Caco-2 (cell line): ENCODE measurements at regions of chr2 and their contacts with region 1.

Region 1: GRCh38 chr2:8761529-8762164 is 75.8 kb downstream of the KIDINS220 start:
- DNase-seq: peak in 1 of 2 experiments; percentile 34
- H3K4me3 ChIP-seq: no peak overlapping the region
- H3K4me3 Mint-ChIP-seq: no peak overlapping the region
- H3K27ac Mint-ChIP-seq: no peak overlapping the region
- H3K4me1 ChIP-seq: no peaks in the 10 kb centered on the region
- H3K4me1 Mint-ChIP-seq: no peaks in the 10 kb centered on the region
- H3K27me3 ChIP-seq: no peaks in the 10 kb centered on the region
- H3K27me3 Mint-ChIP-seq: no peaks in the 10 kb centered on the region
- CTCF ChIP-seq: peak; percentile 62 to 64

Region 2: DNA sequence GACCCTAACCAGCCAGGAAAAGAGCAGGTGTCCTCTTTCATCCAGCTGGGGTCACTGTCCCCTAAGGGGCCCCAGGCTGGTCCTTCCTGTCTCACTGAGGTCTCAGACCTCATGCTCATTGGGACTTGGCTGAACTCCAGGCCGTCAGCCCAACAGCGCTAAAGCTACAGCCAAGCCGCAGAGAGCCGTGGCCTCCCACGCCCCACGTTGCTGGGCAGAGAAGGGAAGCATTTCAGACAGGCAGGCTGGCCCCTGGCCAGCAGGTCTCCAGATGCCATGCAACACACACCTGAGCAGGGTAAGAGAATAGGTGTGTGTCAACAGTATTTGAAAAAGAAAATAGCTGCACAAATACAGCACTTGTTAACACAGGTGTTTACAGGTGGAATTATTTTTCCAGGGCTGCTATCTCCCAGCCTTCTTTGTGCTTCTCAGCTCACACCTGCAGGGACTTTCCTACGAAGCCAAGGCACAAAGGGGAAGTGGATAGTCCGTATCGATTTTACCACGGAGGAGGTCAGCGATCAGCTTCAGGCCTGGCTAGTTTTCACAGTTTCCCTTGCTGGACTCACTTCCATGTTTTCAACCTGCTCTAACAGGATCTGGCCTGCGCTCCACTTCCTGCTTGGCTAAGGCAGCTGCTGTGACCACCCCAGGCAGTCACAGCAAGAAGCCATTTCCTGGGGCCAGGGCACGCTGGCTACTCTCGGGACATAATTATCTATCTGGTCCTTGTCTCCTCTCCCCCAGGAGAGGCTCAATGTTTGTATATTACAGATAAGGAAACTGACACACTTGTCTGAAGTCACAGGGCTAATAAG is 235.9 kb before region 1 on chr2:
- CTCF ChIA-PET with region 1: no interaction called
- POLR2A ChIA-PET with region 1: no interaction called
- intact Hi-C with region 1: loop called (anchors 1 kb)
- DNase-seq: peak; percentile 71 to 76
- H3K4me3 ChIP-seq: no peak overlapping the region
- H3K4me3 Mint-ChIP-seq: no peak overlapping the region
- H3K27ac Mint-ChIP-seq: peak overlapping the region; percentile 62
- H3K4me1 ChIP-seq: peaks cover 15% of the 10 kb centered on the region
- H3K4me1 Mint-ChIP-seq: peaks cover 18% of the 10 kb centered on the region
- H3K27me3 ChIP-seq: no peaks in the 10 kb centered on the region
- H3K27me3 Mint-ChIP-seq: no peaks in the 10 kb centered on the region
- CTCF ChIP-seq: peak; percentile 53 to 62

Region 3: GRCh38 chr2:8821276-8822217 is 59.9 kb after region 1 on chr2:
- CTCF ChIA-PET with region 1: no interaction called
- POLR2A ChIA-PET with region 1: no interaction called
- intact Hi-C with region 1: no loop called
- DNase-seq: peak in 1 of 2 experiments; percentile 53
- H3K4me3 ChIP-seq: no peak overlapping the region
- H3K4me3 Mint-ChIP-seq: no peak overlapping the region
- H3K27ac Mint-ChIP-seq: peak overlapping the region; percentile 13
- H3K4me1 ChIP-seq: peaks cover 9% of the 10 kb centered on the region
- H3K4me1 Mint-ChIP-seq: peaks cover 13% of the 10 kb centered on the region
- H3K27me3 ChIP-seq: no peaks in the 10 kb centered on the region
- H3K27me3 Mint-ChIP-seq: no peaks in the 10 kb centered on the region
- CTCF ChIP-seq: no peak